Endothelial cell of umbilical vein (primary cell): ENCODE measurements at regions of chr19 and their contacts with region 1.

Region 1: GRCh38 chr19:58451358-58452101 is at the start of gene ZNF324B:
- DNase-seq: peak; percentile 95
- H3K4me3 ChIP-seq: peak within 1 kb of the TSS; percentile 33 to 81 (median 62)
- H3K27ac ChIP-seq: peak within 1 kb of the TSS; percentile 18
- H3K4me1 ChIP-seq: peaks cover 3% of the 10 kb centered on the region
- H3K27me3 ChIP-seq: no peaks in the 10 kb centered on the region
- CTCF ChIP-seq: no peak
- POLR2A ChIP-seq: peak; percentile 57
- total RNA-seq, gene ZNF324B: 6.3 and 6.9 TPM in 2 replicates

Region 2: GRCh38 chr19:58439576-58440554 is 11.7 kb before region 1 on chr19 and contains the start of gene ZNF132:
- CTCF ChIA-PET with region 1: interaction called, 3 read pairs
- POLR2A ChIA-PET with region 1: no interaction called
- dilution Hi-C with region 1: no loop called
- intact Hi-C with region 1: loop called (anchors 1 kb)
- DNase-seq: peak; percentile 100
- H3K4me3 ChIP-seq: peak within 1 kb of the TSS; percentile 31 to 83 (median 57)
- H3K27ac ChIP-seq: peak within 1 kb of the TSS; percentile 48
- H3K4me1 ChIP-seq: peaks cover 7% of the 10 kb centered on the region
- H3K27me3 ChIP-seq: peaks cover 0 to 2% of the 10 kb centered on the region in 2 experiments
- CTCF ChIP-seq: no peak
- POLR2A ChIP-seq: peak; percentile 67
- total RNA-seq, gene ZNF132: 4.1 and 4.2 TPM in 2 replicates

Region 3: GRCh38 chr19:58466760-58467589 is 15.4 kb after region 1 on chr19 and contains the start of gene ZNF324:
- CTCF ChIA-PET with region 1: no interaction called
- POLR2A ChIA-PET with region 1: no interaction called
- dilution Hi-C with region 1: no loop called
- intact Hi-C with region 1: loop called (anchors 1 kb)
- DNase-seq: peak; percentile 96
- H3K4me3 ChIP-seq: peak within 1 kb of the TSS; percentile 62 to 76 (median 72)
- H3K27ac ChIP-seq: peak within 1 kb of the TSS; percentile 45
- H3K4me1 ChIP-seq: peaks cover 3% of the 10 kb centered on the region
- H3K27me3 ChIP-seq: no peaks in the 10 kb centered on the region
- CTCF ChIP-seq: no peak
- POLR2A ChIP-seq: peak; percentile 76
- total RNA-seq, gene ZNF324: 7.1 and 8.7 TPM in 2 replicates

Region 4: GRCh38 chr19:58475714-58476497 is 24.4 kb after region 1 on chr19 and contains the start of gene ZNF446:
- CTCF ChIA-PET with region 1: no interaction called
- POLR2A ChIA-PET with region 1: no interaction called
- dilution Hi-C with region 1: no loop called
- intact Hi-C with region 1: loop called (anchors 1 kb)
- DNase-seq: peak; percentile 97
- H3K4me3 ChIP-seq: peak within 1 kb of the TSS; percentile 49 to 70 (median 56)
- H3K27ac ChIP-seq: peak within 1 kb of the TSS; percentile 73
- H3K4me1 ChIP-seq: peaks cover 9% of the 10 kb centered on the region
- H3K27me3 ChIP-seq: no peaks in the 10 kb centered on the region
- CTCF ChIP-seq: no peak
- POLR2A ChIP-seq: peak; percentile 70
- total RNA-seq, gene ZNF446: 6.6 and 7.0 TPM in 2 replicates

Region 5: DNA sequence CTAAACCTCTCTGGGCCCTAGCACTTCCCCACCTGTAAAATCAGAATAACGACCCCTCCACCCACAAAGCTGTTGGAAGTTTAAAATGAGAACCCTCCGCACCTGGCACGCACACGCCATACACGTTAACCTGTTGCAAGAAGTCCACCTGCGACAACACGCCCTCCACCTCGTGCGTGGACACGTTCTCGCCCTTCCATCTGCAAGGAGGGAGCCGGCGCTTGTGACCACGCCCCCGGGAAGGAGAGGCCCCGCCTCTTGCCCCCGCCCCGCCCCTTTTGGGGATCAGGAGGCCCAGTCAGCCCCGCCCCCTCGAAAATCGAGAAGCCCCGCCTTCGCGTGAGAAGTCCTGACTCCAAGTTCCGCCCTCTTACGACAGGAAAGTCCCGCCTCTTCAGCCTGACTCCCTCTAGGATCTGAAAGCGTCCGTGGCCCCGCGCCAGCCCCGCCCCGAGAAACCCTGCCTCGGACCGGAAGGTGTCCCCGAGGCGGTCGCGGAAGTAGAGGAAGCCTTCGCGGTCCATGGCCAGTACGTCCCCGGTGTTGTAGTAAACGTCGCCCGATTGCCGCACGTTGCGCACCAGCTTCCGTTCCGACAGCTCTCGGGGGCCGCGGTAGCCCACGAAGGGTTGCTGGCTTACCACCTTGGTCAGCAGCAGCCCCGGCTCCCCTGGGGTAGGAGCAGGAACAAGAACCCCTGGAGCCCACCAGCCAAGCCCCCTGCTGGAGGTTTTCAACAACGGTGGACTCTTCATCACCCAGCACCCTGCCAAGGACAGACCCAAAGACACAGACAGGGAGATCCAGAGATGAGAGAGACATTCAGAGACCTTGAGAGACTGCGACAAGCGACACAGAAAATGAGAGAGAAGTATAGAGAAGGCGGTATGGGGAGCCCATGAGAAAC is 47.7 kb after region 1 on chr19:
- CTCF ChIA-PET with region 1: no interaction called
- POLR2A ChIA-PET with region 1: no interaction called
- dilution Hi-C with region 1: no loop called
- intact Hi-C with region 1: loop called (anchors 1 kb)
- DNase-seq: peak; percentile 96
- H3K4me3 ChIP-seq: peak overlapping the region in 2 of 3 experiments; percentile 24 to 45
- H3K27ac ChIP-seq: no peak overlapping the region
- H3K4me1 ChIP-seq: peaks cover 4% of the 10 kb centered on the region
- H3K27me3 ChIP-seq: no peaks in the 10 kb centered on the region
- CTCF ChIP-seq: peak; percentile 19 to 43
- POLR2A ChIP-seq: peak; percentile 73